IMR-90 (cell line): ENCODE measurements at regions of chr1 and their contacts with region 1.

Region 1: DNA sequence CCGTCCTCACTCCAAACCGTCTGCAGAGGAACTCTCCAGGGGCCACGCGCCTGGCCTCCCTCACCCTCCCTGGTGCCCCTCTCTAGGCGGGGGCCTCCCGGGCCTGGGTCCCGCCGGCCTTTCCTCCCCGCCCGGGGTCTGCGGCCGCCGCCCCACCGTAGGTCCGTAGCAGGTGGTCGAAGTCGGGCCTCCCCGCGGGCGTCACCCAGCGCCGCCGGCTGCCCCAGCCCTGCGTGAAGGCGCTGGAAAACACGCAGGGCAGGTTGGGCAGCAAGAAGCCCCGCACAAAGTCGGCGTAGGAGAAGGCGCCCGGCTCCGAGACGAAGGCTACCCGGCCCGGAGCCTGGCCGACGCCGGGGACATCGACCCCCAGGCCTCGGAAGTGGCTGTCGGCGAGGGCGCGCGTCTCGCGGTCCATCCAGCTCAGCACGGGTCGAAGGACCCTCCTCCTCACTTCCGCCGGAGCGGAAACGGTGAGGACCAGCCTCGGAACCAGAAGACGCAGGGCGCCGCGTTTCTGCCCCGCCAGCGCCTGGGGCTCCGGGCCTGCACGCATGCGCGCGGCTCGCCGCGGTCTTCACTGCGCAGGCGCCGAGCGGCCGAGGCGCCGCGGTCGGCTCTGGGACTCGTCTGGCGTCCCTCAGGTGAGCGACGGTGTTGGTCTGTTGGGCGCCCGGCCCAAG is at the starts of genes JMJD4 and SNAP47:
- DNase-seq: peak; percentile 90
- ATAC-seq: peak; percentile 95
- H3K4me3 ChIP-seq: peak within 1 kb of the TSS; percentile 94
- H3K27ac ChIP-seq: peak within 1 kb of the TSS; percentile 91
- H3K4me1 ChIP-seq: peaks cover 9% of the 10 kb centered on the region; the same call in 1 of the 2 replicates
- H3K27me3 ChIP-seq: no peaks in the 10 kb centered on the region
- CTCF ChIP-seq: no peak
- POLR2A ChIP-seq: peak; percentile 37; the same call in 1 of the 2 replicates
- RAD21 ChIP-seq: no peak
- total RNA-seq, gene JMJD4: 26.7 and 28.5 TPM in 2 replicates
- total RNA-seq, gene SNAP47: 65.3 and 72.9 TPM in 2 replicates

Region 2: DNA sequence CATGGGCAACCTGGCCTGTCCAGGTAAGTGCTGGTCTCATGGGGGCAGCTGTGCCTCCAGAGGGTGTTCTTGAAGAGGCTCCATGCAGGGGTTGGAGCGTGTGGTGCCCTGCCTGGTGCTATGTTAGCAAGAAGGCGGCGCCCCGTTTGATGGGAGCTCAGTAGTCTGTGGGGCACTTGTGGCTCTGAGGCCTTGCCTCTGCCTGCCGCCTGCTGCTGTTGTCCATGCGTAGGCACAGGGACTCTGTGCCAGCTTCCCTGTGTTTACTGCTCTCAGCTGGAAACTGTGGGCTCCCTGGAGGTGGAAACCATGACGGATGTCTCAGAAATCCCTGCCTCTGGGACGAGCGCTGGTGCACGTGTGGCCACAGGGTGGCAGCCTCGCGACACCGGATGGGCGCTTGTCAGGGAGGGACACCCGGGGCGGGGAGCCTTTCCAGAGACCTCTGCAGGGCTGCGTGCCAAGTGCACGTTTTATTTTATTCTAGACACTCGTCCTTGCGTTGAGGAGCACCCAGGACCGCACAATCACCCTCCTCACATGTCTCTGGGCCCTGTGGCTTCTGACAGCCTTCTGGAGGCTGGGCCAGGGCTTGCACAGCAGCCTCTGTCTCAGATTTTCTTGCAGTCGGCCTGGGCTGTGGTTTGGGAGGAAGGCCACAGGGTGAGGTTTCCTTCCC is 27.4 kb after region 1 on chr1:
- CTCF ChIA-PET with region 1: interaction called, 5 read pairs
- POLR2A ChIA-PET with region 1: interaction called, 3 read pairs
- dilution Hi-C with region 1: no loop called
- in situ Hi-C with region 1: no loop called
- intact Hi-C with region 1: loop called (anchors 2 kb)
- DNase-seq: peak; percentile 69
- ATAC-seq: peak; percentile 74
- H3K4me3 ChIP-seq: no peak overlapping the region
- H3K27ac ChIP-seq: peak overlapping the region; percentile 7; the same call in 1 of the 2 replicates
- H3K4me1 ChIP-seq: peaks cover 38% of the 10 kb centered on the region
- H3K27me3 ChIP-seq: no peaks in the 10 kb centered on the region
- CTCF ChIP-seq: peak; percentile 92
- POLR2A ChIP-seq: no peak
- RAD21 ChIP-seq: peak; percentile 93

Region 3: GRCh38 chr1:227787513-227788270 is 52.7 kb after region 1 on chr1:
- CTCF ChIA-PET with region 1: no interaction called
- POLR2A ChIA-PET with region 1: no interaction called
- dilution Hi-C with region 1: no loop called
- in situ Hi-C with region 1: no loop called
- intact Hi-C with region 1: loop called (anchors 2 kb)
- DNase-seq: peak; percentile 93
- ATAC-seq: peak; percentile 91
- H3K4me3 ChIP-seq: peak overlapping the region; percentile 85
- H3K27ac ChIP-seq: 0 out of 2 replicates have a peak overlapping the region, but pooled peaks have one; percentile 18
- H3K4me1 ChIP-seq: peaks cover 3% of the 10 kb centered on the region; the same call in 1 of the 2 replicates
- H3K27me3 ChIP-seq: no peaks in the 10 kb centered on the region
- CTCF ChIP-seq: no peak
- POLR2A ChIP-seq: no peak
- RAD21 ChIP-seq: no peak